ENCODE measurements at regions of chr6 and their contacts with region 1.

Region 1: GRCh38 chr6:165456286-165456685 is 146.9 kb upstream of the C6orf118 start:
- DNase-seq: peak; percentile 4
- H3K4me3 ChIP-seq: no peak overlapping the region
- H3K27ac ChIP-seq: no peak overlapping the region
- H3K4me1 ChIP-seq: no peaks in the 10 kb centered on the region
- H3K27me3 ChIP-seq: peaks cover 10% of the 10 kb centered on the region
- CTCF ChIP-seq: no peak

Region 2: GRCh38 chr6:165729307-165729936 is 273.1 kb after region 1 on chr6:
- CTCF ChIA-PET with region 1: no interaction called
- POLR2A ChIA-PET with region 1: no interaction called
- intact Hi-C with region 1: loop called (anchors 10 kb)
- DNase-seq: peak; percentile 41
- H3K4me3 ChIP-seq: no peak overlapping the region
- H3K27ac ChIP-seq: no peak overlapping the region
- H3K4me1 ChIP-seq: no peaks in the 10 kb centered on the region
- H3K27me3 ChIP-seq: peaks cover 37% of the 10 kb centered on the region
- CTCF ChIP-seq: peak; percentile 86